MCF 10A (cell line): ENCODE measurements at regions of chr10 and their contacts with region 1.

Region 1: DNA sequence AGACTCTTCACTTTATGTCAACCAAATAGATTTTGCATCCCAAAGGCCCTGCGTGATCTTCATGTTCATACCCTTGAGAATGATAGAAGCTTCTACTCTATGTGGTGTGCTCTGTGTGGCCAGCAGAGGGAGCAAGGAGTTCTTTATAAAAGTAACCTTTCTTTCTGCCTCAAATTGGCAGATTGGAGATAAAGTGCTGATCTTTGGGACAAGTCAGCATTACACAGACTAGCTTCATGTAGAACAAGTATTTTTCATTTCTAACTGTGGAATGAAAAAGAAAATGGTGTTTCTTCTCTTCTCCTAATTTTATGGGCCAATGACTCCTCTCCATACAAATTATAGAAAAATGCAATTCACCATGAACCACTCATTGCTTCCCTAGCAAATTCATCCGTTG is 1214.1 kb downstream of the SORCS1 start:
- DNase-seq: peak; percentile 66
- H3K4me3 Mint-ChIP-seq: no peak overlapping the region
- H3K27ac Mint-ChIP-seq: no peak overlapping the region
- H3K4me1 Mint-ChIP-seq: no peaks in the 10 kb centered on the region
- H3K27me3 Mint-ChIP-seq: no peaks in the 10 kb centered on the region
- CTCF ChIP-seq: peak; percentile 77

Region 2: DNA sequence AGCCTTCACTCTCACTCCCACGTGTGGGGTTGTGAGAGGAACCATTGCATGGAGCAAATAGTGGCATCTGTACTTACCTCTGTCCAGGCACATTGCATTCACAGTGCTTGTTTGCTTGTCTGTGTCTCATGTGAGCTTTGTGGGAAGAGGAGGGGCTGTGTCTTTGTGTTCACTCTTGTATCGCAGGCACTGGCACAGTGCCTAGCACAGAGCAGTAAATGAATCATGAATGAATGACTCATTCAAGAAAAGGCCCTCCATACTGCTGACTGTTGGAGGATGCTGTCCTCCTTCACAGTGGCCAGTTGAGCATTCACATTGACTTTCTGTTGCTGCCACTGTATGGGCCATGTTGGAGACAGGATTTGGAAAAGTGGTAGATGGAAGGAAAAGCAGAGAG is 1184.1 kb before region 1 on chr10:
- CTCF ChIA-PET with region 1: interaction called, 4 read pairs
- POLR2A ChIA-PET with region 1: no interaction called
- intact Hi-C with region 1: loop called (anchors 5 kb)
- DNase-seq: peak; percentile 92
- H3K4me3 Mint-ChIP-seq: no peak overlapping the region
- H3K27ac Mint-ChIP-seq: peak overlapping the region; percentile 28
- H3K4me1 Mint-ChIP-seq: peaks cover 17% of the 10 kb centered on the region
- H3K27me3 Mint-ChIP-seq: no peaks in the 10 kb centered on the region
- CTCF ChIP-seq: no peak

Region 3: GRCh38 chr10:105963334-105963884 is 13.0 kb after region 1 on chr10:
- CTCF ChIA-PET with region 1: interaction called, 17 read pairs
- POLR2A ChIA-PET with region 1: interaction called, 3 read pairs
- intact Hi-C with region 1: no loop called
- DNase-seq: no peak
- H3K4me3 Mint-ChIP-seq: no peak overlapping the region
- H3K27ac Mint-ChIP-seq: no peak overlapping the region
- H3K4me1 Mint-ChIP-seq: no peaks in the 10 kb centered on the region
- H3K27me3 Mint-ChIP-seq: no peaks in the 10 kb centered on the region
- CTCF ChIP-seq: no peak

Region 4: DNA sequence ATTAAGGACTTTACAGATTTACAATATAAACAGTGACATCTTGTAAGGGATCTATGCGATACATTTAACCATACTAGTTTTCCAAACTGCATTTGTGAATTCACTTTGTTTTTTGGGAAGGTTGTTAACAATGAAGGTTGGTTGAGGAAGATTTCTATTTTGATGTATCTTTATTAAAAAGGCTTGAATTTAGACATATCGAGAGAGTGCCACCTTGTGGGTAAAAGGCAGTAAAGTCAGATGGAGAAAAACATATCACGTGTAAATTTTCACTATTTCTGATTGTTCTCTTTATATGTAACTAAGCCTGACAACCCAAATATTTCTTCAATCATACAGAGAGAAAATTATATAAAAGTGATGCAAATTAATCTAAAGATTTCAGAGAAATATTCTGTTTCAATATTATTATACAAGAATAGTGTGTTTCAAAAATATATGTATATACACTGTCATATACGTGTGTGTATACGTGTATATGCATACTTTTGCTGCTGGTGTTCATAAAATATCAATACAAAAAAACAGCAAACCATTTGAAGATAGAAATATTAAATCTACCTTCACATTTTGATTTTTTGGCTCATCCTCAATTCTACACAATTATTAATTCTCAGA is 225.5 kb after region 1 on chr10:
- CTCF ChIA-PET with region 1: interaction called, 40 read pairs
- POLR2A ChIA-PET with region 1: interaction called, 5 read pairs
- intact Hi-C with region 1: loop called (anchors 1 kb)
- DNase-seq: peak; percentile 50
- H3K4me3 Mint-ChIP-seq: no peak overlapping the region
- H3K27ac Mint-ChIP-seq: no peak overlapping the region
- H3K4me1 Mint-ChIP-seq: no peaks in the 10 kb centered on the region
- H3K27me3 Mint-ChIP-seq: no peaks in the 10 kb centered on the region
- CTCF ChIP-seq: peak; percentile 60

Region 5: GRCh38 chr10:106355450-106355849 is 405.0 kb after region 1 on chr10:
- CTCF ChIA-PET with region 1: interaction called, 7 read pairs
- POLR2A ChIA-PET with region 1: no interaction called
- intact Hi-C with region 1: loop called (anchors 5 kb)
- DNase-seq: peak; percentile 27
- H3K4me3 Mint-ChIP-seq: no peak overlapping the region
- H3K27ac Mint-ChIP-seq: no peak overlapping the region
- H3K4me1 Mint-ChIP-seq: peaks cover 5% of the 10 kb centered on the region
- H3K27me3 Mint-ChIP-seq: no peaks in the 10 kb centered on the region
- CTCF ChIP-seq: peak; percentile 35

Region 6: DNA sequence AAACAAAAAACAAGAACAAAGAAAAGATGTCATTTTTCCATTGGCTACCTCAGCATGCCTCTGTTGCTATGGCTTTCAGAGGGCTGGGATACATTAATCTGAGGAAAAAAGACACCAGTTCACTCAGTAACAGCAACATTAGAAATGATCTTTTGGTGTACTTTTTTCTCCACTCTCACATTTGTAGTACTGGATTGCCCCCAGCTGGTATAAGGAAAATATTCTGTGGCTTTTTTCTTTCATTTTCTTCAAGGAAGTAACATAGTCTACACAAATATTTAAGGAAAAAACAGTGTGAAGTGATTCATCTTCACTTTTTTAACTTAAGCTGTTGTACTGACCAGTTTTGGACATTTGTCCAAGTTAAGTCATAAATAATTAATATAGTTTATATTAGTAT is 731.8 kb after region 1 on chr10:
- CTCF ChIA-PET with region 1: no interaction called
- POLR2A ChIA-PET with region 1: no interaction called
- intact Hi-C with region 1: loop called (anchors 5 kb)
- DNase-seq: peak; percentile 31
- H3K4me3 Mint-ChIP-seq: no peak overlapping the region
- H3K27ac Mint-ChIP-seq: no peak overlapping the region
- H3K4me1 Mint-ChIP-seq: peaks cover 8% of the 10 kb centered on the region
- H3K27me3 Mint-ChIP-seq: no peaks in the 10 kb centered on the region
- CTCF ChIP-seq: peak; percentile 32